Upper lobe of right lung (tissue), 1 donor: ENCODE measurements at regions of chr17 and their contacts with region 1.

Region 1: DNA sequence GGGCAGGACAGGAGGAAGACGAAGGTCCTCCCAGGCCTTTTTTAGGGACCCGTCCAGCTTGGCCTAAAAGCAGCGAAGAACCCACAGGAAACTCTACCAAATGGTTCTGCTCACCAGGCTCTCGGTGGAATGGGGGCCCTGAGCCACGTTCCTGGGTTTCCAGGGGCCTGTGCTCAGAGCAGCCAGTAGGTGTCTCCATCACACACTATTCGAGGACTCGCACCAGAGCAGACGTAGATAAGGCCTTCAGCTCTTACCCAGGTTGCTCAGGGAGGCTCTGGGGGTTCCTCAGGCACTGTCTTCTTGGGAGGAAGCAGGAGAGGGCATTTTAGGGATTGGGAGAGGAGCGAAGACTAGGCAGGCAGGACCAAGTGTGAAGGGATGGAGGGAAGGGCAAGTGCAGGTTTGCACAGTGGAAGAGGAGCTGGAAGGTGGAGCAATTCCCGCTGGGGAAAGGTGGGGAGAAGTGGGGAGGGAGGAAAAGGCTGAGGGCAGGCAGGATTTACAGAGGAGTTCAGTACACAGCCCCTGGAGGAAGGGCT is 157.1 kb downstream of the RGS9 start:
- DNase-seq: peak; percentile 72
- ATAC-seq: peak; percentile 96
- H3K4me3 ChIP-seq: no peak overlapping the region
- H3K27ac ChIP-seq: no peak overlapping the region
- H3K4me1 ChIP-seq: peaks cover 8% of the 10 kb centered on the region
- H3K27me3 ChIP-seq: no peaks in the 10 kb centered on the region
- CTCF ChIP-seq: peak; percentile 79

Region 2: DNA sequence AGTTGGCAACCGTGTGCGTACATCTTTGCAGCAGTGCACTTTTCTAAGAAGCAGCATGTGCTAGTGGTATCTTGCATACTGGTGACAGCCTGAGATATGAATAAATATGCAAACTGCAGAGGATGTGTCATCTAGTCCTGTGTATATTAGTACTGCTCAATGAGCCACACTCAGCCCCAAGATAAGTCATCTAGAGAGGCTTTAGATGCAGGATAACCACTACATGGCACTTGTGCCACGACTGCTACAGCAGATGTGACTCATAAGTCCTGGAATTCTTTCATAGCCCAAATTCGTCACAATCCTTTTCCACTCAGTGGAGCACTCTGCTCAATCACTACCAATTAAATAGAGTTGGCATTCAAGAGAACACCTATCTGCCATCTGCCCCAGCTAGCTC is 95.7 kb after region 1 on chr17:
- intact Hi-C with region 1: no loop called
- DNase-seq: no peak
- ATAC-seq: peak; percentile 58
- H3K4me3 ChIP-seq: no peak overlapping the region
- H3K27ac ChIP-seq: no peak overlapping the region
- H3K4me1 ChIP-seq: no peaks in the 10 kb centered on the region
- H3K27me3 ChIP-seq: no peaks in the 10 kb centered on the region
- CTCF ChIP-seq: no peak

Region 3: DNA sequence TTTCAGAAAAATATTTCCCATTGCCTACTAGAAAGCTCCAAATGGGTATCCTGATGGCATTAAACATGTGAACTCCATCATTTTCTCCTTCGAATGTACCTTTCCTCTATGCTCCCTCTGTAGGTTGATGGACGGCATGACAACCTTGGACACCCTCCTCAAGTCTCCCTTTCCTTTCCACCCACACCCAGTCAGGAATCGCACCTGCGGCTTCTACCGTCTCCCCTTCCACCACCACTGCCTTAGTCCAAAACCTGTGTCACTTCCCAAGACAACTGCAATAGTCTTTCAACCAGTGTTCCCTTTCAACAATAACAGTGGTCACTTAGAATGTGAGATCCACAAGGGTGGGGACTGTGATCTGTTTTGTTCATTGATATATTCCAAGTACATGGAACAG is 500.3 kb after region 1 on chr17:
- intact Hi-C with region 1: loop called (anchors 10 kb)
- DNase-seq: no peak
- ATAC-seq: peak; percentile 88
- H3K4me3 ChIP-seq: no peak overlapping the region
- H3K27ac ChIP-seq: no peak overlapping the region
- H3K4me1 ChIP-seq: no peaks in the 10 kb centered on the region
- H3K27me3 ChIP-seq: no peaks in the 10 kb centered on the region
- CTCF ChIP-seq: peak; percentile 51